GM10248 (cell line): ENCODE measurements at regions of chr4 and their contacts with region 1.

Region 1: DNA sequence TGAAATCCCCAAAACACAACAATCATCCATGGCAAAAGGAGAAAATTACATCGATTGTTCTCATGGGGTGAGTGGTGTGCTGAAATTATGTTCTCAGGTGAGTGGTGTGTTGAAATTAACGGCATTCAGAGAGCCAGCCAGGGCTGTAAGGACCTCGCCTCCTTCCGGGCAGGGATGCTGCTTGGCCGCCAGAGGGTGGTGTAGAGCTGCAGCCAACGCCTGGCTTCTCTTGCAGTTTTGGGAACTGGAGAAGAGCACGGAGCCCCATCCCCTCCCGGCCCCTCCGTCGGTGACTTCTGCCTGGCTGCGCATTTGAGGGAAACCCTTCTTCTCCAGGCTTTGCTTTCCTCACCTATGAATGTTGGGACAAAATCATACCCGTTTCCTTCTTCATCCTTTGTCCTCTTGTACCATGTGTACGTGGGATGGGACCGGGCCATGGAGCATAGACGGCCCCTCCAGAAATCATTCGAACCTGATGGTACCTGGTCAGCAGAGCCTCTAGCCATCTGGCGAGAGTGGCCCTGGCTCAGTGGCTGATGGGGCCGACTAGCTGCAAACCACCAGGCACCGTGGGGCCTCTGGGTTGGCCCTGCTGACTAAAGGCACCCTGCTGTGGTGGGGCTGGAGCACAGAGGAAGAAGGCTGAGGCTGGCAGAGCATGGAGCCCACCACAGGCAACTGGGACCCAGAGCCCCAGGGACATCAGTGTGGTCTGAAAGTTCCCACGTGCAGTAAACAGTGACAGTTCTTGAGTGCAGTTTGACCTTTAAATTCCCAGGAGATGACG is 28.4 kb downstream of the TRMT44 start:
- DNase-seq: peak; percentile 82
- CTCF ChIP-seq: peak; percentile 90

Region 2: GRCh38 chr4:8315435-8316250 is 153.3 kb before region 1 on chr4:
- CTCF ChIA-PET with region 1: no interaction called
- POLR2A ChIA-PET with region 1: no interaction called
- DNase-seq: no peak
- CTCF ChIP-seq: no peak

Region 3: DNA sequence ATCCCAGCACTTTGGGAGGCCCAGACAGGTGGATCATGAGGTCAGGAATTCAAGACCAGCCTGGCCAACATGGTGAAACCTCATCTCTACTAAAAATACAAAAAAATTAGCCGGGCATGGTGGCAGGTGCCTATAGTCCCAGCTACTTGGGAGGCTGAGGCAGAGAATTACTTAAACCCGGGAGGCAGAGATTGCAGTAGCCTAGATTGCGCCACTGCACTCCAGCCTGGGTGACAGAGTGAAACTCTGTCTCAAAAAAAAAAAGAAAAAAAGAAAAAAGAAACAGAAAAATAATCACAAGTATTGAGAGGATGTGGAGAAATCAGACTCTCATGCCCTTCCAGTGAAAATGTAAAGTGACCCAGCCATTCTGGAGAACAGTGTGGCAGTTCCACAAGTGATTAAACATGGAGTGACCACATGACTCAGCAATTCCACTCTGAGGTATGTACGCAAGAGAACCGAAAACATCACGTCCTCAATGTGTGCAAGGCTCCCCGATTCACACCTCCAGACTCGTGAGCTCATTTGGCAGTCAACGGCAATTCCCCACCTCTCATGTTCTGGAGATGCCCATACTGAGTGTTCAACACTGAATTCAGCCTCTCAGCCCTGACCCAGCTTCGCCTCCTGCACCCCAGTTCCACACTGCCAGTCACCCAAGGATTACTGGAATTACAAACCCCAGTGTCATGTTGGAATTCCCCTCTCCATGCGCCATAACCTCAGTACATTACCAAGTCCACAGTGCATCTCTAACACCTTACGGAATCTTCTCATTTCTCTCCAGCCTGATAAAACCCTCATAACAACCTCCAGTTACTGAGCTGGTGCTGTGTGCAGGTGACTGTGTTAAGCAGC is 49.5 kb before region 1 on chr4:
- CTCF ChIA-PET with region 1: no interaction called
- POLR2A ChIA-PET with region 1: no interaction called
- DNase-seq: peak; percentile 73
- CTCF ChIP-seq: no peak

Region 4: GRCh38 chr4:8451440-8452197 is 17.3 kb before region 1 on chr4:
- CTCF ChIA-PET with region 1: interaction called, 21 read pairs
- POLR2A ChIA-PET with region 1: no interaction called
- DNase-seq: no peak
- CTCF ChIP-seq: no peak

Region 5: GRCh38 chr4:8478801-8479744 is 10.1 kb after region 1 on chr4:
- CTCF ChIA-PET with region 1: interaction called, 10 read pairs
- POLR2A ChIA-PET with region 1: no interaction called
- DNase-seq: no peak
- CTCF ChIP-seq: no peak

Region 6: GRCh38 chr4:8495851-8496202 is 26.9 kb after region 1 on chr4:
- CTCF ChIA-PET with region 1: interaction called, 12 read pairs
- POLR2A ChIA-PET with region 1: no interaction called
- DNase-seq: no peak
- CTCF ChIP-seq: no peak

Region 7: DNA sequence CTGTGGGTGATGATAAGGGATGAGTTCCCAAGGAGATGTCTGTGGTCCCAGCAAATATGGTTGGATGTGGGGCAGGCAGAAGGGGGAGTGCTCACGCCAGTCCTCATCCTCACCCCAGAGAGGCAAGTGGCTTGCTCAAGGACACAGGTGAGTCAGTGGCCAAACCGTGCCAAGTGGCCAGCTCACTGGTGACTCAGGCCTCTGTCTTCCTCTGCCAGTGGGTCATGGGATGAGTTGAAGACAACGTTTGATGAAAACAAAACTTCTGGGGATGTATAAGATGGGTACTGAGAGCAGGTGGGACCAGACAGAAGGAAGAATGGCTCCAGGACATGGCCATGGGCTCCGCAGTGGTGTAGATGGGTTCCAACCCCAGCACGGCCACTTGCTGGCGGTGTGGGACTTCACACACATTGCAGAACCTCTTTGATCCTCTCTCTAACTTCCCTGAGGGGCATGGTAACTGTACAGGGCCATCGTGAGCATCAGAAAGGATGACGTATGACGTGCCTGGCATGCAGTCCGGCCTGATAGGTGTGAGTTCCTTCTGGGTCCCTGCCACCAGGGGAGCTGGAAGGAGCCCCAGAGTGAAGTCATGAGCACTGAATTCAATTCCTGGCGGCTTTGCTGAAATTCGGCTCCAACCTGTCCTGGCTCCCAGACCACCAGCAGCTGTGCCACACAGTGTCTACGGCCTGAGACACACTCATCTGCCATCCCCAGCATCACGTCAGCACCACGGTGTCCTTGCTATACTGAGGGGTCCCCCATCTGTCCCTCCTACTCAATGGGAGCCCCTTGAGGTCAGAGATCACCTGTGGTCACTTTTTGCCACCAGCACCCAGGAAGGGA is 70.0 kb after region 1 on chr4:
- CTCF ChIA-PET with region 1: interaction called, 79 read pairs
- POLR2A ChIA-PET with region 1: no interaction called
- DNase-seq: no peak
- CTCF ChIP-seq: no peak

Region 8: DNA sequence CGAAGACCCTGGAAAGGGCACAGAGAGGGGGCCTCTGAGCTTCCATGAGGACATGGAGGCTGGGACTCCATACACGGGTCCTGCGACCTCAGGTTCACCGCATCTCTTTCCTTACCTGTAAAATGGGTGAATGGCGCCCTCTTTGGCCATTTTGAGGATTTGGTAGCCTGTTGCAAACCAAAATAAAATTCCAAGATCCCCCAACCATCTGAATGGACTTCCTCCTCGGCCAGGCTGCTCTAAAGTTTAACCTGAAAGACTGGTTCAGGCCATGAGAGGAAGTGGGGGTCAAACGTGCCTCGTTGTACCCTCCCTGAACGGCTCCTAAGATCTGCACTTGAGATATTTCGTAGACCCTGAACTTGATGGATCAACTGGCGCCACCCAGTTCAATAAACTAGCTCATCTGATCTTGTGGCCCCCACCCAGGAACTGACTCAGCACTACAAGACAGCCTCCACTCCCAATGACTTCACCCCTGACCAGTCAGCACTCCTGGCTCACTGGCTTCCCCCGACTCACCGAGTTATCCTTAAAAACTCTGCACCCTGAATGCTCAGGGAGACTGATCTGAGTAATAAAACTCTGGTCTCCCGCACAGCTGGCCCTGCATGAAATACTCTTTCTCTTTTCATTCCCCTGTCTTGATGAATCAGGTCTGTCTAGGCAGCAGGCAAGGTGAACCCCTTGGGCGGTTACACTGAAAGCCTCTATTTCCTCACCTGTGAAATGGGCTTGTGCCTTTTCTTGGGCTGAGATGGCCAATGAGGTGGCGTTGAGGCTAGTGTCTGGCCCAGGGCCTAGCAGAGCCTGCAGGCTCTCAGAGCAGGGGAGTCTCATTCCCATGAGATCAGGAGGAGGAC is 78.4 kb after region 1 on chr4:
- CTCF ChIA-PET with region 1: interaction called, 79 read pairs
- POLR2A ChIA-PET with region 1: no interaction called
- DNase-seq: peak; percentile 67
- CTCF ChIP-seq: peak; percentile 48

Region 9: GRCh38 chr4:8702516-8703400 is 233.8 kb after region 1 on chr4:
- CTCF ChIA-PET with region 1: no interaction called
- POLR2A ChIA-PET with region 1: no interaction called
- DNase-seq: no peak
- CTCF ChIP-seq: no peak